ENCODE measurements at regions of chr9 and their contacts with region 1.

Region 1: GRCh38 chr9:36190388-36191287 is at the start of gene CLTA:
- DNase-seq: peak; percentile 88
- ATAC-seq: peak; percentile 99
- H3K4me3 Mint-ChIP-seq: peak within 1 kb of the TSS; percentile 97
- H3K27ac Mint-ChIP-seq: peak within 1 kb of the TSS; percentile 82
- H3K4me1 Mint-ChIP-seq: peaks cover 50% of the 10 kb centered on the region
- H3K27me3 Mint-ChIP-seq: peaks cover 11% of the 10 kb centered on the region
- total RNA-seq, gene CLTA: 119 to 123 TPM

Region 2: GRCh38 chr9:36102742-36103495 is 87.7 kb before region 1 on chr9:
- POLR2A ChIA-PET with region 1: interaction called, 15 read pairs
- DNase-seq: peak; percentile 81
- ATAC-seq: peak; percentile 100
- H3K4me3 Mint-ChIP-seq: no peak overlapping the region
- H3K27ac Mint-ChIP-seq: no peak overlapping the region
- H3K4me1 Mint-ChIP-seq: peaks cover 8% of the 10 kb centered on the region
- H3K27me3 Mint-ChIP-seq: peaks cover 2% of the 10 kb centered on the region

Region 3: GRCh38 chr9:36136272-36136893 is 54.3 kb before region 1 on chr9 and contains the start of gene GLIPR2:
- POLR2A ChIA-PET with region 1: interaction called, 12 read pairs
- DNase-seq: peak; percentile 88
- ATAC-seq: peak; percentile 97
- H3K4me3 Mint-ChIP-seq: peak within 1 kb of the TSS; percentile 96
- H3K27ac Mint-ChIP-seq: peak within 1 kb of the TSS; percentile 72
- H3K4me1 Mint-ChIP-seq: peaks cover 48% of the 10 kb centered on the region
- H3K27me3 Mint-ChIP-seq: peaks cover 29% of the 10 kb centered on the region
- total RNA-seq, gene GLIPR2: 56.5 to 58.1 TPM

Region 4: GRCh38 chr9:36148311-36149051 is 42.2 kb before region 1 on chr9:
- POLR2A ChIA-PET with region 1: interaction called, 13 read pairs
- DNase-seq: peak; percentile 71
- ATAC-seq: peak; percentile 31
- H3K4me3 Mint-ChIP-seq: peak overlapping the region; percentile 8
- H3K27ac Mint-ChIP-seq: peak overlapping the region; percentile 62
- H3K4me1 Mint-ChIP-seq: peaks cover 81% of the 10 kb centered on the region
- H3K27me3 Mint-ChIP-seq: no peaks in the 10 kb centered on the region

Region 5: DNA sequence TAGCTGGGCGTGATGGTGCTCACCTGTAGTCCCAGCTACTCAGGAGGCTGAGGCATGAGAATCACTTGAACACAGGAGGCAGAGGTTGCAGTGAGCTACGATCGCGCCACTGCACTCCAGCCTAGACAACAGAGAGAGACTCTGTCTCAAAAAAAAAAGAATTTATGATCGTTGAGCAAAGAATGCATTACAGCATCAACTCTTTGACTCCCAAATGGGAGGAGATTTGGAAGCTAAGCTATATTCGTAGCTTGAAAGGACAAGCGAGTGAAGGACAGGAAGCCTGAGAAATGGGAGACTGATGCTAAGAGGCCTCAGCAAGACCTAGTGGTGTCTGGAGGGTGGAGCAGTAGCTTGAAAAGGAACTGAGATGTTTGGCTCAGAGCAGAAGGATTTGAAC is 31.7 kb before region 1 on chr9:
- POLR2A ChIA-PET with region 1: no interaction called
- DNase-seq: no peak
- ATAC-seq: no peak
- H3K4me3 Mint-ChIP-seq: no peak overlapping the region
- H3K27ac Mint-ChIP-seq: no peak overlapping the region
- H3K4me1 Mint-ChIP-seq: peaks cover 14% of the 10 kb centered on the region
- H3K27me3 Mint-ChIP-seq: no peaks in the 10 kb centered on the region

Region 6: DNA sequence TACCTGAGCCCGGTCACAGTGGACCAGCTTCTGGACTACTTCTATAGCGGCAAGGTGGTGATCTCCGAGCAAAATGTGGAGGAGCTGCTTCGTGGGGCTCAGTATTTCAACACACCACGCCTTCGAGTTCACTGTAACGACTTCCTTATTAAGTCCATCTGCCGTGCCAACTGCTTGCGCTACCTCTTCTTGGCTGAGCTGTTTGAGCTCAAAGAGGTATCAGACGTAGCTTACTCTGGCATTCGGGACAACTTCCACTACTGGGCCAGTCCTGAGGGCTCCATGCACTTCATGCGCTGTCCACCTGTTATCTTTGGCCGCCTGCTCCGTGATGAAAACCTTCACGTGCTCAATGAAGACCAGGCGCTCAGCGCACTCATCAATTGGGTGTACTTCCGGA is 20.9 kb before region 1 on chr9:
- POLR2A ChIA-PET with region 1: no interaction called
- DNase-seq: no peak
- ATAC-seq: no peak
- H3K4me3 Mint-ChIP-seq: no peak overlapping the region
- H3K27ac Mint-ChIP-seq: no peak overlapping the region
- H3K4me1 Mint-ChIP-seq: peaks cover 6% of the 10 kb centered on the region
- H3K27me3 Mint-ChIP-seq: peaks cover 36% of the 10 kb centered on the region

Region 7: GRCh38 chr9:36204906-36205547 is 14.4 kb after region 1 on chr9:
- POLR2A ChIA-PET with region 1: interaction called, 10 read pairs
- DNase-seq: no peak
- ATAC-seq: no peak
- H3K4me3 Mint-ChIP-seq: no peak overlapping the region
- H3K27ac Mint-ChIP-seq: no peak overlapping the region
- H3K4me1 Mint-ChIP-seq: peaks cover 31% of the 10 kb centered on the region
- H3K27me3 Mint-ChIP-seq: no peaks in the 10 kb centered on the region

Region 8: DNA sequence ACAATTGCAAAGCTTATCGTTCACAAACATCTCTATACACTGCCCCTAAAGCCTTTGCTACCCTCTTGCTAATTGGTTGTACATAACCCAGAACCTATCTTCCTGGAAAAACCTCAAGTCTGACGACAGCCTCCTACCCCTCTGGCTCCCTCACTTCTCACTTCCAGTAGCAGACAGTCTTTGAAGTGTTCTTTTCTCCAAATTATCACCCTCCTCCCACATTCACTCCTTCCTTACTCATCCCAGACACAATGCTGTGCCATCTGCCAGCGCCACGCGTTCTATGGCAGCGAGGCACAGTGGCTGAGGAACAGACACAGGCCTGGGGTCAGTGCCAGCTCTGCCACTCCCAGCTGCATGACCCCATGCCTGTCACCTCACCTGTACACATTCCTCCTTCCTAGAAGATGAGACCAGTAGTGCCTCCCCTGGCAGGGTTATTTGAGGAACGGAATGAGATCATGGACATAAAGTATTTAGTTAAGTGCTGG is 27.8 kb after region 1 on chr9:
- POLR2A ChIA-PET with region 1: interaction called, 16 read pairs
- DNase-seq: peak; percentile 47
- ATAC-seq: peak; percentile 93
- H3K4me3 Mint-ChIP-seq: peak overlapping the region; percentile 44
- H3K27ac Mint-ChIP-seq: peak overlapping the region; percentile 79
- H3K4me1 Mint-ChIP-seq: peaks cover 38% of the 10 kb centered on the region
- H3K27me3 Mint-ChIP-seq: no peaks in the 10 kb centered on the region

Region 9: DNA sequence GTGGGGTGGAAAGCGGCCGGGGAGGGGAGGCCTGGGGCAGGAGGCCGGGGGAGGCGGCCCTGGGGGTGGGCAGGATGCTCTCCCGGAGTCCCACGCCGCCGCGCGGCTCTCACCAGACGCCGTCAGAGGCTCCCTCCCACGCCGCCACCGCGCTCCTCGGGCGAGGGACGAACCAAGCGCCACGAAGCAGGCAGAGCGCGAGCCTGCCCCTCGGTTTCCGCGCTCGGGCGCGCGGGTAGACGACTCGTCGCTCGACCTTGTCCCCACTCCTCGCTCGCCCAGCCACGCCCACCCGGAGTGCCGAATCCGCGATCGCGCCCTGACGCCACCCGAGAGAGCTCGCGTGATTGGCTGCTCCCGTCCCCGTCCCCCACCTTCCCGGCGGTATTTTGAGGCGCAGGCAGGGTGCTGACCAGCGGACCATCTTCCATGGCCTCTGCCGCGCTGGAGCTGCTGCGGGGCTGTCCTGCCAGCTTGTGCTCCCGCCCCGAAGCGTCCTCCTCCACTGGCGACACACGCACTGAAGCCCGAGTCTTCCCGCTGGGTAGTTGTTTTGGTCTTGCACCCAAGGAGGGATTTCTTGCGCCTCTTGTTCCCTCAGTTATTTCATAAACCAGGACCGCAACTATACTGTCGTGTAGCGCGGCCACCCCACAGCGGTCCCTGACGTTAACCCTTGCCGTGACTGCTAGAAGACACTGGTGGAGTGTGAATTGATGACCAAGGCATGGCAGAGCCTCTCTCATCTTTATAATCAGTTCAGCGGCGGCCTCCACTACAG is 67.8 kb after region 1 on chr9 and contains the start of gene GNE:
- POLR2A ChIA-PET with region 1: interaction called, 20 read pairs
- DNase-seq: peak; percentile 98
- ATAC-seq: peak; percentile 83
- H3K4me3 Mint-ChIP-seq: peak within 1 kb of the TSS; percentile 97
- H3K27ac Mint-ChIP-seq: peak within 1 kb of the TSS; percentile 94
- H3K4me1 Mint-ChIP-seq: peaks cover 8% of the 10 kb centered on the region
- H3K27me3 Mint-ChIP-seq: no peaks in the 10 kb centered on the region
- total RNA-seq, gene GNE: 16.3 to 17.1 TPM

Region 10: DNA sequence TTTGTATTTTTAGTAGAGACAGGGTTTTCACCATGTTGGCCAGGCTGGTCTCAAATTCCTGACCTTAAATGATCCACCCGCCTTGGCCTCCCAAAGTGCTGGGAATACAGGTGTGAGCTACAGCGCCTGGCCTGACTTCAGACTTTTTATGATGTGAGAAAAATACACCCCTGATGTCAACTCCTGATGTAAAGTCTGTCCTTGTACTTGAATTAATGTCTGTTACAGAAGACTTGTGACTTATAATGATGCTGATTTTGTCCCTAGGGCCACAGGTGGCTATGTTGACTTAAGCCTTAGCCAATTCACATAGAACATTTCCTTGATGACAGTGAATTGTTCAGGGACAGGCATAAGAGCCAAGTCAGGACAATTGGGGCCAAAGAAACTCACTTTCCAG is 339.6 kb after region 1 on chr9:
- POLR2A ChIA-PET with region 1: no interaction called
- DNase-seq: no peak
- ATAC-seq: no peak
- H3K4me3 Mint-ChIP-seq: no peak overlapping the region
- H3K27ac Mint-ChIP-seq: no peak overlapping the region
- H3K4me1 Mint-ChIP-seq: peaks cover 2% of the 10 kb centered on the region
- H3K27me3 Mint-ChIP-seq: peaks cover 6% of the 10 kb centered on the region

Measured in activated naive CD8-positive, alpha-beta T cell treated with anti-CD3 and anti-CD28 coated beads, Interleukin-2, amount 10 ng/mL, durations not matched to agents 7 days and 5 days (primary cell).